Thyroid gland (tissue), 4 donors: ENCODE measurements at regions of chr10 and their contacts with region 1.

Region 1: GRCh38 chr10:7525314-7526016 is 114.6 kb upstream of the SFMBT2 start:
- DNase-seq: peak; percentile 58 to 64
- H3K4me3 ChIP-seq: no peak overlapping the region
- H3K27ac ChIP-seq: no peak overlapping the region
- H3K4me1 ChIP-seq: no peaks in the 10 kb centered on the region
- H3K27me3 ChIP-seq: no peaks in the 10 kb centered on the region
- CTCF ChIP-seq: peak; percentile 56 to 95 (median 80)
- POLR2A ChIP-seq: no peak

Region 2: GRCh38 chr10:7687228-7687907 is 161.9 kb after region 1 on chr10:
- intact Hi-C with region 1: loop called (anchors 5 kb)
- DNase-seq: peak; percentile 87 to 89
- H3K4me3 ChIP-seq: no peak overlapping the region
- H3K27ac ChIP-seq: no peak overlapping the region
- H3K4me1 ChIP-seq: no peaks in the 10 kb centered on the region
- H3K27me3 ChIP-seq: no peaks in the 10 kb centered on the region
- CTCF ChIP-seq: peak; percentile 86 to 98 (median 92)
- POLR2A ChIP-seq: no peak

Region 3: DNA sequence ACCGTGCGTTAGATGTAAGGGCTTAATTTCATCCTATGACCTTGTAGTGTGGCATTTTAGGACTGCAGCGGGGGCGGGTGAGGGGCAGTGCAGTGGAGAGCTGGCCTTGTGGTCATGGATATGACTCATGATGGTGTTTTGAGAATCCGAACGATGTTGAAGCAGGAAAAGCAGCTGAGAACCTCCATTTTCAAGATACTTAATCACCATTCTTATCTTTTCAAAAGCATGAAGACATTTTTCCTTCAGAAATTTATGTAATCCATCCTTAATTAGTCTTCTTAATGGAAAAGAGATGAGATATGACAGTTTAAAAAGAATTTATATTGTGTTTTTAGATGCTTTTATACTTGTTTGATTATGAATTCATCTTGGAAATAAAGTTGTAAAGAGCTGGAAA is 272.1 kb after region 1 on chr10:
- intact Hi-C with region 1: no loop called
- DNase-seq: no peak
- H3K4me3 ChIP-seq: no peak overlapping the region
- H3K27ac ChIP-seq: no peak overlapping the region
- H3K4me1 ChIP-seq: peaks cover 0 to 8% of the 10 kb centered on the region in 2 donors
- H3K27me3 ChIP-seq: no peaks in the 10 kb centered on the region
- CTCF ChIP-seq: no peak
- POLR2A ChIP-seq: no peak

Region 4: GRCh38 chr10:9302120-9302746 is 1776.8 kb after region 1 on chr10:
- intact Hi-C with region 1: loop called (anchors 10 kb)
- DNase-seq: no peak
- H3K4me3 ChIP-seq: no peak overlapping the region
- H3K27ac ChIP-seq: no peak overlapping the region
- H3K4me1 ChIP-seq: no peaks in the 10 kb centered on the region
- H3K27me3 ChIP-seq: no peaks in the 10 kb centered on the region
- CTCF ChIP-seq: peak in 5 of 6 experiments; percentile 20 to 67 (median 48)
- POLR2A ChIP-seq: no peak